Caco-2 (cell line): ENCODE measurements at regions of chr2 and their contacts with region 1.

Region 1: DNA sequence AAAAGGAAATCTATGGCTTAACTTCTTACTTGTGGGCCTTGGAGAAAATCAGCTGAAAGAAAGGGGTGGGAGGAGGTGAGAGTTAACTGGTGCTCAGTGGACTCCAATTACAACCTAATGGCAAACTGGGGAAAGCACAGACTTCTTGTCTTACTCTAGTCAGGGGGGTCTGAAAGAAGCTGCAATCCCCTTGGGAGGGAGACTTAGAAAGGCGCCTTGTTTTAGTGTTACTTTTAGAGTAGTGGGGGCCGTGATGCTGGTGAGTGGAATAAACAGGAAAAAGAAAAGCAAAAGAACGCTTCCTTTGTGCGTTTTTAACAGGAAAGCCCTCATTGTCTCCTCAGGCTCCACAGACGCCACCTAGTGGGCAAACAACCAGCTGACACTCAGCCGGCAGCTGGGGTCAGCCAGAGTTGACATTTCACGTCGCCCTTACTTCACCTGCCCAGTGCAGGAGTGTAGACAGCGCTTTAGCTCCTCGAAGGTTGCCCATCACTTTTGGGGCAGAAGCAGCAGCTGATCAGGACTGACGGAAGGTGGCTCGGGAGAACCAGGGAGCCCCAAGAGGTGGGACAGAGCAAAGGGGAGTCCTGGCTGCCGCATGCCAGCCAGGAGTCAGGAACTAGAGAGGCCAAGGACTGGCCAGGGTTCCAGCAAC is 55.9 kb upstream of the GORASP2 start:
- DNase-seq: peak; percentile 79 to 85
- H3K4me3 ChIP-seq: no peak overlapping the region
- H3K4me3 Mint-ChIP-seq: peak overlapping the region; percentile 64
- H3K27ac Mint-ChIP-seq: peak overlapping the region; percentile 68
- H3K4me1 ChIP-seq: no peaks in the 10 kb centered on the region
- H3K4me1 Mint-ChIP-seq: peaks cover 11% of the 10 kb centered on the region
- H3K27me3 ChIP-seq: no peaks in the 10 kb centered on the region; the same call in 1 of the 2 replicates
- H3K27me3 Mint-ChIP-seq: peaks cover 12% of the 10 kb centered on the region
- CTCF ChIP-seq: peak; percentile 92 to 96

Region 2: DNA sequence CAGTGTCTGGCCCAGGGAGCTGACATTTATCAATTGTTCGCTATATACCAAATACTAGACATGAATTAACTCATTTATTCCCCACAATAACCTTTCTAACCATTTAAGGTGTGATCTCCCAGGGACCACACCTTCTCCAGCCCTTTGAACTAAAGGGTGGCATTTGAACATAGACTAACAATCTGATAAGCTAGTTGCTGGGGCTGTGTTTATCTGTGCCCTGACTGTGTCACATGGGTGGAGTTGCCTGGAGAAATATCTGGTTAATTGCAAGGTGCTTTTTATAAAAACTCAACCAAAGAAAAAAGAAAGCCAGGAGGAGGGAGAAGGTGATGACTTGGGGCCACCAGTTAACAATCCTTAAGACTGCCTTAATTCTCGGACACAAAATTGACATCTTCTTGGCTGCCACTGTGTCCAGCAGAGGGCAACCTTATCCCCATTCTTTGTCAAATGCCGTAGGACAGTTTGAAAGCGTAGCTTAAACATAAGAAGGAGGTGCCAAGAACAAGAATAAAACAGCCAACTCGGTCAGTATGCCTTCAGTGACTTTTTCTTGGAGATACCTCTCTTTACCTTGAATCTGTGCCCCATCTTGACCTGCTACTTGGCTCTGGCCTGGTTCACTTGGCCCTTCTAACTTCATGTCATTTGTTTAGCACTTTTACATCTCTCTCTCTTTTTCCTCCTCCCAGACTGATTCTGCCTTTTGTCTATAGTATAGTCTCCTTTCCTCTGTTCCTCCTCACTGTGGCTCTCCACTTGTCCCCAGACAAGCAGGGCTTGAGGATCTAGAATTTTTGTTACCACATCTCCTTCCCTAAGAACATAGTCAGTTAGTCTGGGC is 511.9 kb before region 1 on chr2:
- CTCF ChIA-PET with region 1: interaction called, 17 read pairs
- POLR2A ChIA-PET with region 1: no interaction called
- intact Hi-C with region 1: loop called (anchors 1 kb)
- DNase-seq: peak; percentile 58 to 70
- H3K4me3 ChIP-seq: no peak overlapping the region
- H3K4me3 Mint-ChIP-seq: no peak overlapping the region
- H3K27ac Mint-ChIP-seq: no peak overlapping the region
- H3K4me1 ChIP-seq: no peaks in the 10 kb centered on the region
- H3K4me1 Mint-ChIP-seq: peaks cover 10% of the 10 kb centered on the region
- H3K27me3 ChIP-seq: no peaks in the 10 kb centered on the region
- H3K27me3 Mint-ChIP-seq: no peaks in the 10 kb centered on the region
- CTCF ChIP-seq: peak; percentile 81 to 87

Region 3: GRCh38 chr2:170846314-170846713 is 26.9 kb before region 1 on chr2:
- CTCF ChIA-PET with region 1: interaction called, 3 read pairs
- POLR2A ChIA-PET with region 1: no interaction called
- intact Hi-C with region 1: loop called (anchors 1 kb)
- DNase-seq: no peak
- H3K4me3 ChIP-seq: no peak overlapping the region
- H3K4me3 Mint-ChIP-seq: no peak overlapping the region
- H3K27ac Mint-ChIP-seq: no peak overlapping the region
- H3K4me1 ChIP-seq: no peaks in the 10 kb centered on the region
- H3K4me1 Mint-ChIP-seq: no peaks in the 10 kb centered on the region
- H3K27me3 ChIP-seq: no peaks in the 10 kb centered on the region
- H3K27me3 Mint-ChIP-seq: no peaks in the 10 kb centered on the region
- CTCF ChIP-seq: no peak

Region 4: GRCh38 chr2:170928824-170929685 is 55.9 kb after region 1 on chr2 and contains the start of gene GORASP2:
- CTCF ChIA-PET with region 1: interaction called, 3 read pairs
- POLR2A ChIA-PET with region 1: interaction called, 4 read pairs
- intact Hi-C with region 1: loop called (anchors 2 kb)
- DNase-seq: peak; percentile 98 to 100
- H3K4me3 ChIP-seq: peak within 1 kb of the TSS; percentile 98
- H3K4me3 Mint-ChIP-seq: peak within 1 kb of the TSS; percentile 98
- H3K27ac Mint-ChIP-seq: peak within 1 kb of the TSS; percentile 99
- H3K4me1 ChIP-seq: peaks cover 21% of the 10 kb centered on the region
- H3K4me1 Mint-ChIP-seq: peaks cover 29% of the 10 kb centered on the region
- H3K27me3 ChIP-seq: no peaks in the 10 kb centered on the region
- H3K27me3 Mint-ChIP-seq: no peaks in the 10 kb centered on the region
- CTCF ChIP-seq: peak; percentile 87 to 91
- total RNA-seq, gene GORASP2: 124 and 143 TPM in 2 replicates